Dendritic cell treated with granulocyte-macrophage colony-stimulating factor and Interleukin-4, amounts not matched to agents 40 ng/mL and 50 ng/mL, for 4 days (primary cell): ENCODE measurements at regions of chr1 and their contacts with region 1.

Region 1: DNA sequence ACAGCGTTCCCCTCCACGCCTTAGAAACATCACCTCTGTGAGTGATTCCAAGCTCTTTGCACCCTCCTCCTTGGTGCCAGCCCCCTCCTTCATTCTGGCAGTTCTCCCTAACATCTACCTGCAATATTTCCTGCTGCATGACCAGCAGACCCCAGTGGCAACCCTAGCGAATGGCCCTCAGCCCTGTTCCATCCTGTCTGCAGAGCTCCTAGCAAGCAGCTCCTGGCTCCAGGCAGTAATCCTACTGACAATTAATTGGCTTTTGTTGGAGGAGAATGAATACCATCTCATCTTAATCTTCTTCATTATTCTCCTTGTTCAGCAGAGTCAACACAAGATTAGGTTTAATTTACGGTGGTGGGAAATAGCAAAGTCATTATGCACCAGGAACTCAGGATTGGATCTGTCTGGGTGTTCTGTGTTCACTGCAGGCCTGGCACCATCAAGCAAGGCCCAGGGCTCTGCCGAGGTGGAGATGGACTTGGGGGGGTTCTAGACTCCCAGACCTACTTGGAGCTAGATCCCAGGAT is 12.4 kb downstream of the FBXO2 start:
- H3K4me3 Mint-ChIP-seq: no peak overlapping the region
- H3K27ac Mint-ChIP-seq: no peak overlapping the region
- H3K4me1 Mint-ChIP-seq: no peaks in the 10 kb centered on the region
- H3K27me3 Mint-ChIP-seq: peaks cover 35% of the 10 kb centered on the region

Region 2: GRCh38 chr1:11037740-11038182 is 604.1 kb before region 1 on chr1:
- intact Hi-C with region 1: loop called (anchors 2 kb)
- H3K4me3 Mint-ChIP-seq: no peak overlapping the region
- H3K27ac Mint-ChIP-seq: no peak overlapping the region
- H3K4me1 Mint-ChIP-seq: no peaks in the 10 kb centered on the region
- H3K27me3 Mint-ChIP-seq: no peaks in the 10 kb centered on the region

Region 3: DNA sequence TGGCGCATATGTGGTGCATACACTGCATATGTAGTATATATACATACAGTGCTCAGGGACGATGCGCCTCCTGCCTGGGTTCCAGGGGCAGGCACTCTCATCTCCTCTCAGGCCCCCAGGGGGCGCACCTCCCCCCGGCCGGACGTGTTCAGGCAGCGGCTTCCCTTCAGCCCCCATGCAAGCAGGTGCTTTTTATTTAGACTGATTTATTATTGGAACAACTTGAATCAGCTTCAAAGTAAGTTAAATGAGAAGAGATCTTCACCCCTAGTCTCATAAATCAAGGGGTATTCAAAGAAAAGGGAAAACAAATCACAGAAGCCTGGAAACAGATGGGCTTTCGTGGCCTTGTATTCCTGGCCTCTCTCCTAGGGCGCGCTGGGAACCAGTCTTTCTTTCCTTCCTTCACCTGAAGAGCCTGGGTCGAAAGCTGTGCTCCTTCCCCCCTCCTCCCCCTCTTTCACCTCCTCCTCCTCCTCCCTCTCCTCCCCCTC is 304.2 kb before region 1 on chr1:
- intact Hi-C with region 1: loop called (anchors 2 kb)
- H3K4me3 Mint-ChIP-seq: no peak overlapping the region
- H3K27ac Mint-ChIP-seq: no peak overlapping the region
- H3K4me1 Mint-ChIP-seq: no peaks in the 10 kb centered on the region
- H3K27me3 Mint-ChIP-seq: peaks cover 33% of the 10 kb centered on the region